Lower leg skin (tissue), 4 donors: ENCODE measurements at regions of chr7 and their contacts with region 1.

Region 1: DNA sequence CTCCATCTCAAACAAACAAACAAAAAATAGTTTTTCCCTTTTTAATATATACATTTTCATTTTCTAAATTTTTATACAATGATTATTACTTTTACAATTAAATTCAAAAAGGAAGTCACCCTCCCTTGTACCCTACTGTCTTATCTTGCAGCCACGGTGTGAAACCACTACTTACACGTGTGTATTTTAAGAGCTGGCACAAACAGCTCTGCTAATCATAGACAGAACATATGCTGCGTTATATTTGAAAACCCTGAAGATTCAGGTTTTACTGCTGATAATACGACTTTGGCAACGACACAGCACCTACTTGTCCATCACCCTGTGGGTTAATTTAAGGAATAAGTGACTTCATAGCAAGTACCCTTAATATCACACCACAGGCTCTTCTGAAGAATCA is 991 bp downstream of the ANKRD61 start:
- DNase-seq: no peak
- H3K4me3 ChIP-seq: no peak overlapping the region
- CTCF ChIP-seq: no peak
- POLR2A ChIP-seq: no peak

Region 2: GRCh38 chr7:5507013-5507412 is 525.2 kb before region 1 on chr7:
- intact Hi-C with region 1: no loop called
- DNase-seq: no peak
- H3K4me3 ChIP-seq: no peak overlapping the region
- CTCF ChIP-seq: no peak
- POLR2A ChIP-seq: no peak

Region 3: DNA sequence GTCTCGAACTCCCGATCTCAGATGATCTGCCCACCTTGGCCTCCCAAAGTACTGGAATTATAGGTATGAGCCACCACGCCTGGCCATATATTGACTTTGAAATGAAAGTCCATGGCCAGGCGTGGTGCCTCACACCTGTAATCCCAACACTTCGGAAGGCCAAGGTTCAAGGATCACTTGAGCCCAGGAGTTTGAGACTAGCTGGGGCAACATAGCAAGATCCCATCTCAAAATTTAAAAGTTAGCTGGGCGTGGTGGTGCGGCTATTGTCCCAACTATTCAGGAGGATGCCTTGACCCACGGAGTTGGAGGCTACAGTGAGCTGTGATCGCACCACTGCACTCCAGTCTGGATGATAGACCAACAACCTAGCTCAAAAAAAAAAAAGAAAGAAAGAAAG is 139.7 kb before region 1 on chr7:
- intact Hi-C with region 1: no loop called
- DNase-seq: no peak
- H3K4me3 ChIP-seq: no peak overlapping the region
- CTCF ChIP-seq: no peak
- POLR2A ChIP-seq: no peak

Region 4: GRCh38 chr7:6057316-6058129 is 25.4 kb after region 1 on chr7:
- intact Hi-C with region 1: loop called (anchors 1 kb)
- DNase-seq: no peak
- H3K4me3 ChIP-seq: no peak overlapping the region
- CTCF ChIP-seq: no peak
- POLR2A ChIP-seq: no peak

Region 5: GRCh38 chr7:6092953-6093354 is 60.8 kb after region 1 on chr7:
- intact Hi-C with region 1: loop called (anchors 10 kb)
- DNase-seq: no peak
- H3K4me3 ChIP-seq: no peak overlapping the region
- CTCF ChIP-seq: no peak
- POLR2A ChIP-seq: no peak